WTC11 (cell line): ENCODE measurements at regions of chr3 and their contacts with region 1.

Region 1: GRCh38 chr3:142129516-142130171 is 19.7 kb downstream of the TFDP2 start:
- DNase-seq: no peak
- ATAC-seq: no peak
- H3K4me3 Mint-ChIP-seq: no peak overlapping the region
- H3K27ac Mint-ChIP-seq: no peak overlapping the region
- H3K4me1 Mint-ChIP-seq: peaks cover 2% of the 10 kb centered on the region
- H3K27me3 Mint-ChIP-seq: no peaks in the 10 kb centered on the region
- CTCF ChIP-seq: no peak

Region 2: DNA sequence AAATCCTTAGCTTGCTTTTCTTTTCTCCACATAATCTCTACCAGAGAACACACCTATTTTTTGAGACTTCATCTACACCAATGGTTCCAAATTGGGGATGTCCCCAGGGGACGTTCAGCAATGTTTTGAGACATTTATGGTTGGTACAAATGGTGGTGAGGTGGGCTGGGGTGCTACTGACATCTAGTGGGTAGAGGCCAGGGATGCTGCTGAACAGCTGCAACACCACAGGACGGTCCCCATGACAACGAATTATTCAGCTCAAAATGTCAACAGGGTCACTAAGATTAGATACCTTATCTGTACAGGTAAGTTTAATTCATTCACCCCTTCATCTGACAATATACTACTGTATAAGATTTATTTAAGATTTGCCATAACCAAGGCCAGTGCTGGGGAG is 81.4 kb after region 1 on chr3:
- CTCF ChIA-PET with region 1: interaction called, 11 read pairs
- POLR2A ChIA-PET with region 1: no interaction called
- DNase-seq: peak; percentile 32
- ATAC-seq: peak; percentile 90
- H3K4me3 Mint-ChIP-seq: no peak overlapping the region
- H3K27ac Mint-ChIP-seq: no peak overlapping the region
- H3K4me1 Mint-ChIP-seq: peaks cover 13% of the 10 kb centered on the region
- H3K27me3 Mint-ChIP-seq: no peaks in the 10 kb centered on the region
- CTCF ChIP-seq: no peak

Region 3: GRCh38 chr3:142279965-142280590 is 150.4 kb after region 1 on chr3:
- CTCF ChIA-PET with region 1: interaction called, 14 read pairs
- POLR2A ChIA-PET with region 1: no interaction called
- DNase-seq: peak; percentile 20
- ATAC-seq: peak; percentile 98
- H3K4me3 Mint-ChIP-seq: no peak overlapping the region
- H3K27ac Mint-ChIP-seq: no peak overlapping the region
- H3K4me1 Mint-ChIP-seq: no peaks in the 10 kb centered on the region
- H3K27me3 Mint-ChIP-seq: peaks cover 15% of the 10 kb centered on the region
- CTCF ChIP-seq: peak; percentile 66